OCI-LY7 (cell line): ENCODE measurements at regions of chr5 and their contacts with region 1.

Region 1: DNA sequence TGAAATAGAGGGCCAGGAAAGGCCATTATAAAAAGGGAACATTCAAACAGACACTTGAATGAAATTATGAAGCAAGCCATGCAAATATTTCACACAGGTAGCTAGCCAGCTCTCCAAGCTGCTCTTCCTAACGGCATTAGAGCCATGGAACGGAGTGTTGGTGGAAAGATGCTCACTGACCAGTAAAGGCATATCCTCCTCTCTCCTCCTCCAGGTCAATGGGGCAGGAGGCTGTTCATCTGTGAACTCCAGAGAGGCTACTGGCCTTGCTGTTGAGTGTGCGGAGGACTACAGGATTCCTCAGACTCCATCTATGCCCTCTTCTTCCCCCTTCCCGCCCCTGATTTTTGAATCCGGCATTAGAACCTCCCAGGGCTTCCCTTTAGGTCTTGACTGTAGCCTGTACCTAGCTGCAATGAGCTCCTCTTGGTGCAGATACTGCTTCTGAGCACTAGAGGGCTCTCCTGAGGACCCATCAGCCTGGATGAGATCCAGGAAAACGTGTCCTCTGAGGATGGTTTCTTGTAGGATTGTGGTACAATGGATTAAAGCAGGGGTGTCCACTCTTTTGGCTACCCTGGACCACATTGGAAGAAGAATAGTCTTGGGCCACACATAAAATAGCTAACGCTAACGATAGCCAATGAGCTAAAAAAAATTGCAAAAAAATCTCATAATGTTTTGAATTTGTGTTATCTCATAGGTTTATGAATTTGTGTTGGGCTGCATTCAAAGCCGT is 162.2 kb downstream of the SREK1 start:
- DNase-seq: peak; percentile 61
- H3K4me3 ChIP-seq: no peak overlapping the region
- H3K27ac ChIP-seq: no peak overlapping the region
- H3K4me1 ChIP-seq: no peaks in the 10 kb centered on the region
- CTCF ChIP-seq: peak; percentile 92

Region 2: DNA sequence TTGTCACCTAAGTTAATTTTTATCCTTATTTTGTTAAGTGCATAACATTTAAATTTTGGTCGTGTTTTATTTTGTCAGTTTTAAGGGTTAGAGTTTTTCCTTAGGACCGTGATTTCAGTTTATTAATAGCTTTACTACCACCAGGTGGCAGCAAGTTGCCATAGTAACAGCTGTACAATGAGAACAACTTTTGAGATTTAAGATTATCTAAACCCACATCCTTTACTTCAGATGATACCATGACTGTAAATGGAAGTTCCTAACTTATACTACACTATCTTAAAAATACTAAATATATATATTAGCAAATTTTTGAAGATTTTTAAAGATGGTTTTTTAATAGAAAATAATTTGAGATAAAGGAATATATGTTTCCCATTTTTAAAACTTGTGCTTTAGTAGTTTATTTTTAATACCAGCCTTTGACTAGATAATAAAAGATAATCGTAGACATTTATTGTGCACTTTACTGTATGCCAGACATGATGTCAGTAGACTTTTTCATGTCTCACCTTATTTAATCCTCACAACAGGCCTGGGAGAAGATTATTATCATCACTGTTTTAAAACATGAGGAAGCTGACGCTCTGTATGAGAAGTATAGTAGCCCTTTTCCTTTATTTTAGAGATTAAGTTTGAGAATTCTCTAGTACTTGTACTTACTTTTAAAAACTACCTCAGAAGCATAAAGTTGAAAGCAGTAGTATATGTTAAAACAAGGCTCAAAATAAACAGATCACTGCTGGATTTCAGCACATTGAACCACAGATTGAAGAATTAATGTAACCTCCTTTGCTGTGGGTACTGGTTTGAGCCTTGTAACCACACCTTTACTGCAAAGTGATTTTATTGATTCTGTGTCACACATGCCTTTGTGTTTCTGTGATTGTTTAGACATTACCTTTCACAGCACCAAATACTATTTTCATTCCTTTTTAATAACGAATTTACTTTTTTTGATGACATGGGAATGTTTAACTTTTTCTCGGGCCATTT is 134.6 kb before region 1 on chr5:
- CTCF ChIA-PET with region 1: no interaction called
- POLR2A ChIA-PET with region 1: no interaction called
- intact Hi-C with region 1: loop called (anchors 1 kb)
- DNase-seq: peak; percentile 82
- H3K4me3 ChIP-seq: no peak overlapping the region
- H3K27ac ChIP-seq: peak overlapping the region; percentile 17
- H3K4me1 ChIP-seq: peaks cover 42% of the 10 kb centered on the region
- CTCF ChIP-seq: peak; percentile 86

Region 3: GRCh38 chr5:66498791-66499207 is 192.5 kb after region 1 on chr5:
- CTCF ChIA-PET with region 1: no interaction called
- POLR2A ChIA-PET with region 1: no interaction called
- intact Hi-C with region 1: loop called (anchors 10 kb)
- DNase-seq: no peak
- H3K4me3 ChIP-seq: no peak overlapping the region
- H3K27ac ChIP-seq: no peak overlapping the region
- H3K4me1 ChIP-seq: no peaks in the 10 kb centered on the region
- CTCF ChIP-seq: peak; percentile 44

Region 4: GRCh38 chr5:66582499-66583165 is 276.4 kb after region 1 on chr5:
- CTCF ChIA-PET with region 1: no interaction called
- POLR2A ChIA-PET with region 1: no interaction called
- intact Hi-C with region 1: loop called (anchors 10 kb)
- DNase-seq: no peak
- H3K4me3 ChIP-seq: no peak overlapping the region
- H3K27ac ChIP-seq: no peak overlapping the region
- H3K4me1 ChIP-seq: no peaks in the 10 kb centered on the region
- CTCF ChIP-seq: no peak

Region 5: GRCh38 chr5:66757188-66757833 is 451.0 kb after region 1 on chr5:
- CTCF ChIA-PET with region 1: interaction called, 5 read pairs
- POLR2A ChIA-PET with region 1: no interaction called
- intact Hi-C with region 1: loop called (anchors 1 kb)
- DNase-seq: peak; percentile 63
- H3K4me3 ChIP-seq: no peak overlapping the region
- H3K27ac ChIP-seq: no peak overlapping the region
- H3K4me1 ChIP-seq: no peaks in the 10 kb centered on the region
- CTCF ChIP-seq: peak; percentile 85

Region 6: DNA sequence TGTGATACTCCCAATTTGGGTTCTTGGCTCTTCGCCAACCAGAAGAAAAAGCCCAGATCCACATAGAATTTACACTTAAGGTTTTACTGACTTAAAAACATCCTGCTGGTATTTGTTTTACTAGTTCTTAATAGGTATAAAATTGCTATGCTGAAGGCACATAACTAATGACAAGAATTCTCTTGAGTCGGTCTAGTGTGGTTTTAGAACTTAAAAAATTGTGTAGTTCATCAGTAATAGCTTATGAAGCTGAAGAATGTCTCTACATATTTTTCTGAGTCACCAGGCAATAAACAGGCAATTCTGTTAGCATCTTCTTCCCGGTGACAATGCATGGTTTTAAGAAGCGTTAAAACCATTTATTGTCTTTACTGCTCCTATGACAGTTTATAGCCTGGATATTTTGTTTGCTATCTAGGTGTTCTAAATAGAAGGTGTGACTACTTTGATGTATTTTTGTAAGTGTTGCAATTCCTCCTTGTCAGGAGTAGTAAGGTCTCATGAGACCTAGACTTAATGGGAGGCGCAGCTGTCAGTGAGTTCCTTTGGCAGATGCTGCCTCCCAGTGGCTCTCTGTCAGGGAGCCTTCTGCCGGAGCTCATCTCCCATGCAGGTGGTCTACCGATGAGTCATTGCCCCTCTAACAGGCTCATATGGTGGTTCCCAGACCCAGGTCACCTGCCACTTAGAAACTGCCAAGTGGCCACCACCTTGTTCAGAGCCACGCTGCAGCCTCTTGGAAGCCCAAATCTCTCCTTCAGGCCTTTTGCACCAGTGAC is 463.8 kb after region 1 on chr5:
- CTCF ChIA-PET with region 1: interaction called, 5 read pairs
- POLR2A ChIA-PET with region 1: no interaction called
- intact Hi-C with region 1: loop called (anchors 1 kb)
- DNase-seq: peak; percentile 36
- H3K4me3 ChIP-seq: no peak overlapping the region
- H3K27ac ChIP-seq: no peak overlapping the region
- H3K4me1 ChIP-seq: no peaks in the 10 kb centered on the region
- CTCF ChIP-seq: peak; percentile 69

Region 7: GRCh38 chr5:66987949-66988838 is 681.9 kb after region 1 on chr5:
- CTCF ChIA-PET with region 1: no interaction called
- POLR2A ChIA-PET with region 1: no interaction called
- intact Hi-C with region 1: no loop called
- DNase-seq: peak; percentile 55
- H3K4me3 ChIP-seq: no peak overlapping the region
- H3K27ac ChIP-seq: no peak overlapping the region
- H3K4me1 ChIP-seq: no peaks in the 10 kb centered on the region
- CTCF ChIP-seq: peak; percentile 89